Activated naive CD4-positive, alpha-beta T cell treated with anti-CD3 and anti-CD28 coated beads for 36 hours (primary cell): ENCODE measurements at regions of chr3 and their contacts with region 1.

Region 1: GRCh38 chr3:119676771-119677640 is at the start of gene COX17:
- DNase-seq: peak; percentile 97
- H3K4me3 Mint-ChIP-seq: peak within 1 kb of the TSS; percentile 82
- H3K27ac Mint-ChIP-seq: peak within 1 kb of the TSS; percentile 95
- H3K4me1 Mint-ChIP-seq: peaks cover 31% of the 10 kb centered on the region
- H3K27me3 Mint-ChIP-seq: no peaks in the 10 kb centered on the region
- total RNA-seq, gene COX17: 104 to 113 TPM

Region 2: DNA sequence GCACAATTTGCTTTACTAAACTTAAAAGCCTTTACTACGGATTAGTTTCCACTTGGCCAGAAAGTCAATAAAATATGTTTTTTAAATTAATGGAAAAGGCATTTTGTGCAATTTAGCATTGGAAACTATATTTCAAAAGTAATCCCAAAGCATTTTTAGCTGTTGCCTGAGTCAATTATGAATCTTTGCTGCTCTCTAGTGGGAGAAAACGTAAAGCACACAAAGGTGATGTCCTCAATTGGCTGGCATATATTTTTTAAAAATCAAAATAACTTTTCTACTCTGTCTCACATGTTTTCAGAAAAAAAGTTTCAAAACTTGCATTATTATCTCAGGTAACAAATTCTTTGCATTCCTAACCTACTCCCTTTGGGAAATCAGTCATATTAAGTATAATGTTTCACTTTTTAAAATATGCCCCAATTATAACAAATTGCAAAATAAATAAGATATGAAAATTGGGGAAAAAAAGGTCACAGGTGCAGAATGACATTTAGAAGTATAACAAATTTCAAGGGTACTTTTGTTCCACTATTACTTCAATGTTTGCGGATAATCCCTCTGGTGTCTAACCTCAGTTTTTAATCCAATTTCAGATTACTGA is 578.3 kb before region 1 on chr3:
- CTCF ChIA-PET with region 1: no interaction called
- intact Hi-C with region 1: loop called (anchors 1 kb)
- DNase-seq: no peak
- H3K4me3 Mint-ChIP-seq: no peak overlapping the region
- H3K27ac Mint-ChIP-seq: no peak overlapping the region
- H3K4me1 Mint-ChIP-seq: no peaks in the 10 kb centered on the region
- H3K27me3 Mint-ChIP-seq: no peaks in the 10 kb centered on the region

Region 3: DNA sequence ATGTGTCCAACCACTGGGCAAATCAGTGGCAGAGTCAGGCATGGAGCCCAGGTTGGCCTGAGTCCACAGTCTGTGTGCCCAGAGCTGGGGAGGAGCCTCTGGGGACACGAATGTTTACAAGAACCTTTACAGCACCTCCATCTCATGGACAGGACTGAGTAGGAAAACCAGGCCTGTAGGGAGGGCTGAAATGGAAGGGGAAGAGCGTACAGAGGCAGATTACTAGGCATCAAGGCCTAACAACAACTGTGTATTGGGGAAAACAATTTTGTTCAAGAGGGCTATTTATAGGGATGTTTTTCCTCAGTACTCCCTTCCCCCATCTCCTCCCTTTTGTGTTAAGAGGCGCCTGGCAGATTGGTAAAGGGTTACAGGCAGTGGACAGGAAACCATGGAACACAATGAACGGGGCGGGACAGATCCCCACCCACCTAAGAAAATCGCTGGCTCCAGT is 397.9 kb before region 1 on chr3:
- CTCF ChIA-PET with region 1: interaction called, 7 read pairs
- intact Hi-C with region 1: loop called (anchors 1 kb)
- DNase-seq: no peak
- H3K4me3 Mint-ChIP-seq: no peak overlapping the region
- H3K27ac Mint-ChIP-seq: no peak overlapping the region
- H3K4me1 Mint-ChIP-seq: peaks cover 19% of the 10 kb centered on the region
- H3K27me3 Mint-ChIP-seq: no peaks in the 10 kb centered on the region

Region 4: GRCh38 chr3:119463171-119464169 is 213.5 kb before region 1 on chr3 and contains the start of gene TMEM39A:
- CTCF ChIA-PET with region 1: interaction called, 4 read pairs
- intact Hi-C with region 1: loop called (anchors 1 kb)
- DNase-seq: peak; percentile 98
- H3K4me3 Mint-ChIP-seq: peak within 1 kb of the TSS; percentile 96
- H3K27ac Mint-ChIP-seq: peak within 1 kb of the TSS; percentile 90
- H3K4me1 Mint-ChIP-seq: peaks cover 32% of the 10 kb centered on the region
- H3K27me3 Mint-ChIP-seq: no peaks in the 10 kb centered on the region
- total RNA-seq, gene TMEM39A: 21.4 to 26.9 TPM

Region 5: DNA sequence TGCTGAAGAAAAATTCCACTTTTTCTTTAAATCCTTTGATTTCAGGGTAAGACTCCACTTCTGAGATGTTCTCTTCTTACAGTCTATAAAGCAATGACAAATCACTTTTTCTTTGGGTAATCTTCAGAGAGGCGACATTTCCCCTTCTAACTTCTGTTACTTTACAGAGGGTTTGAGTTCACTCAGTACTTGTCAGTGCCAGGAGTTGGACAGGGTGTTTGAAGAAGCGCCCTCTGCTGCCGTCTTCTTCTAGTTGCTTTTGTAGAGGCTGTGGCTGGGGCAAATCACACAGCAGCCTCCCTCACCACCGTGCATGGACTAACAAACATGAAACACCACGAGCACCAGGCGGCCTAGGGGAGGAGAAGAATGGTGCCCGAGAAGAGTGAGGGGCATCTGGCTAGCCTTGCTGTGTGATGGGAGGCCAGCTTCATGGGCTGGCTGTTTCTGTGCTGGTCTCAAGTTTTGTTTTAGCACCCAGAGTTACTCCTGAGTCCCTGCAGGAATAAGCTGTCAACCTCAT is 117.5 kb before region 1 on chr3 and contains the start of gene CD80:
- CTCF ChIA-PET with region 1: no interaction called
- intact Hi-C with region 1: loop called (anchors 2 kb)
- DNase-seq: peak; percentile 81
- H3K4me3 Mint-ChIP-seq: no peak within 1 kb of the TSS
- H3K27ac Mint-ChIP-seq: no peak within 1 kb of the TSS
- H3K4me1 Mint-ChIP-seq: peaks cover 10% of the 10 kb centered on the region
- H3K27me3 Mint-ChIP-seq: no peaks in the 10 kb centered on the region
- total RNA-seq, gene CD80: 0.14 to 0.40 TPM

Region 6: GRCh38 chr3:119618905-119619493 is 58.0 kb before region 1 on chr3:
- CTCF ChIA-PET with region 1: interaction called, 5 read pairs
- intact Hi-C with region 1: loop called (anchors 1 kb)
- DNase-seq: no peak
- H3K4me3 Mint-ChIP-seq: no peak overlapping the region
- H3K27ac Mint-ChIP-seq: no peak overlapping the region
- H3K4me1 Mint-ChIP-seq: no peaks in the 10 kb centered on the region
- H3K27me3 Mint-ChIP-seq: peaks cover 10% of the 10 kb centered on the region

Region 7: GRCh38 chr3:119702530-119703157 is 25.6 kb after region 1 on chr3 and contains the start of gene CFAP91:
- CTCF ChIA-PET with region 1: no interaction called
- intact Hi-C with region 1: loop called (anchors 1 kb)
- DNase-seq: peak; percentile 83
- H3K4me3 Mint-ChIP-seq: peak within 1 kb of the TSS; percentile 72
- H3K27ac Mint-ChIP-seq: no peak within 1 kb of the TSS
- H3K4me1 Mint-ChIP-seq: peaks cover 45% of the 10 kb centered on the region
- H3K27me3 Mint-ChIP-seq: peaks cover 2% of the 10 kb centered on the region
- total RNA-seq, gene CFAP91: 0.26 to 0.57 TPM

Region 8: DNA sequence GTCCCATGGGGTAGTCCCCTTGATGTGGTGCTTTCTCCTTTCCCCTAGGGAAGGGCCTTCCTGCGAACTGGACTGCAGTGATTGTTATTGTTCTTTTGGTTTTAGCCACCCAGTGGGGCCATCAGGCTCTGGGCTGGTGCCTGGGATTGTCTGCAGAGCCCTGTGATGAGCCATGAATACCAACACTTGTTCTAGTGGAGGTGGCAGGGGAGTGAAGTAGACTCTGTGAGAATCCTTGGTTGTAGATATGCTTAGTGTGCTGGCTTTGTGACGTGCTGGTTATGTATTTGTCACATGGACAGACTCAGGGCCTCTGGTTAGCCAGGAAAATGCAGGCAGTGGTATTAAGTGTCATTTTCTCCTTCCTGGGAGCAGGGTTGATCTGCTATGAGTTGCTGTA is 867.4 kb after region 1 on chr3:
- CTCF ChIA-PET with region 1: no interaction called
- intact Hi-C with region 1: no loop called
- DNase-seq: no peak
- H3K4me3 Mint-ChIP-seq: no peak overlapping the region
- H3K27ac Mint-ChIP-seq: no peak overlapping the region
- H3K4me1 Mint-ChIP-seq: no peaks in the 10 kb centered on the region
- H3K27me3 Mint-ChIP-seq: peaks cover 13% of the 10 kb centered on the region